ENCODE measurements at regions of chr3 and their contacts with region 1.

Region 1: GRCh38 chr3:190883973-190884832 is 21.7 kb upstream of the GMNC start:
- DNase-seq: peak; percentile 67
- H3K4me3 ChIP-seq: no peak overlapping the region
- H3K27ac ChIP-seq: no peak overlapping the region
- H3K4me1 ChIP-seq: no peaks in the 10 kb centered on the region
- CTCF ChIP-seq: peak; percentile 99

Region 2: GRCh38 chr3:190840146-190840545 is 44.1 kb before region 1 on chr3:
- CTCF ChIA-PET with region 1: no interaction called
- POLR2A ChIA-PET with region 1: no interaction called
- intact Hi-C with region 1: no loop called
- DNase-seq: no peak
- H3K4me3 ChIP-seq: no peak overlapping the region
- H3K27ac ChIP-seq: no peak overlapping the region
- H3K4me1 ChIP-seq: no peaks in the 10 kb centered on the region
- CTCF ChIP-seq: no peak

Region 3: DNA sequence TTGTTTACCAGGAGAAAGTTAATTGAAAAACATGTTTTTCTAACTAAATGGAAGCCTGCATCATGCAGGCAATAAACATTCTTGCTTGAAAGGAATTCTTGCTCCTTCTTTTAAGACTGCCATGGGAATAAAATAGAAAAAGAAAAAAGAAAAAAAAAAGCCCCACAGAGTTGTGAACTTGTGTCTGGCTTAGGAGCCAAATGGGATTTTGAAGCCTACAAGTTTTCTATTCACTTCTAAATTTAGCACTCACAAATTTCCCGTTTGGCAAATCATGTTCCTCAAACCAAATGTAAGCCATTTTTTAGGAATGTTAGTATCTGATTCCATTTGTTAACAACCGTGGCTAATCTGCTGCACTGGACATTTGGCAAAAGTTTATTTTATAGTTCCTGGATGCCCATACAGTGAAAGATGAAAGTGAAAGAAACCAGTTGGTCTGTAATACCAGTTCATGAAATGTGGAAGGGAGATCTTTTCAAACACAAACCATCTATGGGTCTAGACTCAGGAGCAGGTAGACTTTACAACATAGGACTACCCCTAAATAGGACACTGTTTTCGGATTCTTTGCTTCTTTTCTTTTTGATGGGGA is 112.1 kb after region 1 on chr3:
- CTCF ChIA-PET with region 1: no interaction called
- POLR2A ChIA-PET with region 1: no interaction called
- intact Hi-C with region 1: no loop called
- DNase-seq: no peak
- H3K4me3 ChIP-seq: no peak overlapping the region
- H3K27ac ChIP-seq: no peak overlapping the region
- H3K4me1 ChIP-seq: no peaks in the 10 kb centered on the region
- CTCF ChIP-seq: no peak

Region 4: DNA sequence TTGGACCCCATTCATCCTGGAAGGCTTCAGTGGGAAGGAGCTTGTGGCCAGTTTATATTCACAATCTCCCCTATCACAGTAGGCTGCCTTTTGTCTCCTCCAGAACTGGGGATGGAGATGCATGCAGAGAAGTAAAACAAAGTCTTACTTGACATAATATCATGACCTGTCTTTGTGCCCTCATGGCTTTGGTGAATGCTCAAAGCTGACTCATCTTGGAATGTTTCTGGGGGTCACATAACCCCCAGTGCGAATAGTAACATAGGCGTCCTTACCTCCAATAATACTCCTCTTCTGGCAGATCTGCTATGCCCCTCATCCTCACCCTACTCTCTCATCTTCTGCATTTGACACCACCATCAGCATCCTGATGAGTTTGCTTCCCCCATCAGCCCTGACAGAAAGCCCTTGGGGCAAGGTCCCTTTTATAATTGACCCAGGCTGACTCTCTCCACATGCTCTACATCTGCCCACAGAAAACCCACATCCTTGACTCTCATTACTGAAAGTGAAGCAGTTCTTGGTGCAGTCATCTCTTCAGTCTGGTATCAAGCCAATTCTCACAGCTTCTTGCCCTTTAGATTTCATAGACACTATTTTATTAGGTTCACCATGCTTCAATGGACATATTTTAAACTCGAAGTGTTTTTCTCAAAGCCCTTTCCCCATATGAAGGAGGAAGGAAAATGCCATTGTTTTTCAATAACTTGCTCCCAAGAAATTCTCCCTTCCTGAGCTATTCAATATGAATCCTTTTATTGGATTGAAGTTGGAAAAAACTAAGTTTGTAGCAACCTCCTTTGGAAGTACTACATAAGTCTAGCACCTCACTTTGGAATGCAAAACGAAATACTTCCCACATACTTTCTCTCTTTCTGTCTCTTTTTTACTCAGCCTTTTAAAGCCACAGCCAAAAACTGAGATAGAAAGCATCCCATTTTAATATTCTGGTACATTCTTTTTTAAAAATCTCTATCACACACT is 351.4 kb after region 1 on chr3:
- CTCF ChIA-PET with region 1: no interaction called
- POLR2A ChIA-PET with region 1: no interaction called
- intact Hi-C with region 1: loop called (anchors 10 kb)
- DNase-seq: no peak
- H3K4me3 ChIP-seq: no peak overlapping the region
- H3K27ac ChIP-seq: no peak overlapping the region
- H3K4me1 ChIP-seq: peaks cover 14% of the 10 kb centered on the region
- CTCF ChIP-seq: no peak

Region 5: DNA sequence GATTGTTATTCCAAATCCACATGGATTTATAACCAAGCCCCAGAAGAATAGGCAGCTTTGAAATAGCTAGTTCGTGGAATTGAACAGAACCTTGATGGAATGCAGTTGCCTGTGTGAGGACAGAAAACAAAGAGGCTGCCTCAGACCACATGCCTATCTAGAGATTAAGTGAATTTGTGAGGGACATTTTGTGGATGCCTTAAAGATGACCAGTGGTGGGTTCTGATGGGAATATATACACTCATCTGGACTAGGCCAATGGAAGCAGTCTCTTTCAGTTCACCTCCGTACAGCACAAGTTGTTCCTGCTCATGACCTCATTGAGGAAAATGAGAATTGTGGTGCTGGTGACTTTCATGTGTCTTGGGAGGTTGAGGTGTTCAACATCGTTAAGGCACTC is 513.6 kb after region 1 on chr3:
- CTCF ChIA-PET with region 1: no interaction called
- POLR2A ChIA-PET with region 1: no interaction called
- intact Hi-C with region 1: loop called (anchors 10 kb)
- DNase-seq: no peak
- H3K4me3 ChIP-seq: no peak overlapping the region
- H3K27ac ChIP-seq: no peak overlapping the region
- H3K4me1 ChIP-seq: no peaks in the 10 kb centered on the region
- CTCF ChIP-seq: no peak